AG04449 (cell line): ENCODE measurements at regions of chr12 and their contacts with region 1.

Region 1: DNA sequence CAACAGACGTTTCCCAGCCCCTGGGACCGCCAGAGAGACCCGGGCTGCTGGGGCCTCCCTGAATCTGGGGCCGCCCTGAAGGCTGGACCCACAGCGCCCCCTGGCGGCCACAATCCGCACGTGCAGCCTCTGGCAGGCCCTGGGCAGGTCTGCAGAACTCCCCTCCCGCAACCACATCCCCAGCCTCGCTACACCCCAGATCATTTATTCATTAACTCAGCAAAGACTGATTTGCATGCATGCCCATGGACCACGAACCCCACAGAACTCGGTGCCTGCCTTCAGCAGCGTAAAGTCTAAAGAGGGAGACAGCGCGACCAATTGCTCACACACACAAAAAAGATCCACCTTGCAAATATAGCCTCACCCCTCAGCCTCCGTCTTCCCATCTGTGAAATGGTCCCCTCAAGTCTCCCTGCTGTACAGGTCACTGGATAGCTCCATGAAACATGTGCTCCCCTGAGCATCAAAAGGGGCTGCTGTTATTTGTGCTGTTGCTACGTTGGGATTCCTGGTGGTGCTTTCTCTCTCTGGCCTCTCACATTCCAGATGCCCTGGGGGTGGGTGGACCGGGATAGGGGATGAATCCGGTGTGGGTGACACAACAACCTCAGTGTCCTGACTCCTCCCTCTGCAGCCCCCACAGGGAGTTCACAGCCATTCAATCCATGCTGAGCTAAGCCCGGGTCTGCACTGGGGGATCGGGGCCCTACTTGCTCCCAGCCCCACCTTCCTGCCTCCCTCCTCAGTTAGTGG is 96.4 kb downstream of the SCARB1 start:
- DNase-seq: no peak
- H3K4me3 ChIP-seq: no peak overlapping the region
- CTCF ChIP-seq: peak; percentile 98

Region 2: DNA sequence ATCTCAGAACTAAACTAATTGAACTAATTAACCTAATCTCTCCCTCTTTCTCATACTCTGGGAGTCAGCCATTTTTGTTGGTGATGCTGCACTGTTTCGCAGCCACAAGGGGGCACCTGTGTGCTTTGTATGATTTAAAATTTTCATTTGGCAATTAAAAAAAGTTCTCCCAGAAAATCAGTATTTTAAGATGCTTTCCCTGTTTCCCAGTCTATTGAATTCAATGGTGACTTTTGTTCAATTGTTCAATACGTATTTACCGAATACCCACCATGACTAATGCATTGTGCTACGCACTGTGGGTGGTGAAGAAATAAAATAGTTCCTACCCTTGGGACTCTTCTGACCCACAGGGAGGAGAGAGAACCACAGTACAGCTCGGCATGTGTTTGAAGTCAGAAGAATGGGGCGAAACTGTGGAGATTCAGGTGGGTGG is 730.6 kb before region 1 on chr12:
- CTCF ChIA-PET with region 1: interaction called, 73 read pairs
- POLR2A ChIA-PET with region 1: no interaction called
- DNase-seq: no peak
- H3K4me3 ChIP-seq: no peak overlapping the region
- CTCF ChIP-seq: peak; percentile 65

Region 3: DNA sequence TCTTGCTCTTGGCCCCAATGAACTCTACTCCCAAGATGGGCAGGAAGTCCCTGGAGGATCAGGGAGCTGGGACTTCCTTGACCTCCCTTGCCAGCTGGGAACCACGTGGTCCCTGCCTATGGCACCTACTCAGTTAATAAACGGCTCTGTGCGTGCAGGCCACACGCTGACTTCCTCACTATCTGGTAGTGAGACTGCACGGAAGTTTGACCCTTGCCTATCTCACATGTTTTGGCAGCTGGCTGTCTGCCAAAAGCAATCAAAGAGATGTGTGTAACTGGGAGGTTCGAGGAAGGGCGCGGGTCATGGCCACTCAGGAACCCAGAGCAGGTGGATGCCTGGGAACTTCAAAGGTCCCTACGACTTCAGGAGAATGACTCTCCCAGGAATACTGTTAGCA is 414.4 kb before region 1 on chr12:
- CTCF ChIA-PET with region 1: interaction called, 25 read pairs
- POLR2A ChIA-PET with region 1: no interaction called
- DNase-seq: no peak
- H3K4me3 ChIP-seq: no peak overlapping the region
- CTCF ChIP-seq: no peak

Region 4: GRCh38 chr12:124497658-124498057 is 269.6 kb before region 1 on chr12:
- CTCF ChIA-PET with region 1: interaction called, 35 read pairs
- POLR2A ChIA-PET with region 1: no interaction called
- DNase-seq: no peak
- H3K4me3 ChIP-seq: no peak overlapping the region
- CTCF ChIP-seq: no peak

Region 5: GRCh38 chr12:124524231-124524925 is 242.9 kb before region 1 on chr12:
- CTCF ChIA-PET with region 1: interaction called, 21 read pairs
- POLR2A ChIA-PET with region 1: interaction called, 12 read pairs
- DNase-seq: no peak
- H3K4me3 ChIP-seq: no peak overlapping the region
- CTCF ChIP-seq: no peak

Region 6: GRCh38 chr12:124709722-124710677 is 57.2 kb before region 1 on chr12:
- CTCF ChIA-PET with region 1: interaction called, 24 read pairs
- POLR2A ChIA-PET with region 1: no interaction called
- DNase-seq: no peak
- H3K4me3 ChIP-seq: no peak overlapping the region
- CTCF ChIP-seq: no peak

Region 7: DNA sequence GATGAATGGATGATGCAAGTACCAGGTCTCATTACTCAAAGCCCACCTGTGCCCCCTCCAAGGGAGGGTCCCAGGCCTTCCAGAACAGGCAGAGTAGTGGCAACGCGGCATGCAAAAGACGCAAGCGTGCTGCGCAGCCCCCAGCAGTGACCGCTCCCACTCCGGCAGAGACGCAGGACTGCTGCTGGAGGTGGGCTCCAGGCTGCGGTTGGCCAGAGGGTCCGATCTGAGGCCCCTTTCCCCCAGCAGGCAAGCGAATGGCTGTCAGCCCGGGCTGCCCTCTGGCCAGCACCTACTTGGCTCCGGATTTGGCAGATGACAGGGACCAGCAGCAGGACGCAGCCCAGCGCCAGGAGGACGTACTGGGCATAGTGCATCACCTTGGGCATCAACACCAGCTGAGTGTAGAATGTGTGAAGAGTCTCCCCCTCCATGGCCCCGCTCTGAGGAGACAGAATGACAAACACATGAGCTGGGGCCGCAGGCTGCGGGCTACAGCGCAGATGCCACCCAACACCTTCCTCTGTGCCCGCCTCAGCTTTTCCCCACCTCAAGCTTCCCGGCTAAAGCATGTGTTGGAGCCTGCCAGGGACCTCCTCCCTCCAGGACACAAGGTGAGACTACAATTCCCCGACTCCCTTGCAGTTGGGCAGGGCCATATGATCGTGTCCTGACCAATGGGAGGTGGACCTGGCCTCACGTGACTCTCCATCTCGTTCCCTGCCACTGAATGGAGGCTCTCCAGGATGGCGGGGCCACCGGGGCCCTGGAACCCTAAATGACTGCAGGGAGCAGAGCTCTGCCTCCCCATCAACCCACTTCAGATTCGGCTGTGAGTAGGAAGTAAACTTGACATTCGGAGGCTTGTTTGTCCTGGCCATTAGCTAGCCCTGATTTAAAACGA is 19.1 kb after region 1 on chr12:
- CTCF ChIA-PET with region 1: interaction called, 10 read pairs
- POLR2A ChIA-PET with region 1: no interaction called
- DNase-seq: peak; percentile 42
- H3K4me3 ChIP-seq: peak overlapping the region; percentile 54
- CTCF ChIP-seq: no peak

Region 8: GRCh38 chr12:125049093-125049458 is 281.8 kb after region 1 on chr12:
- CTCF ChIA-PET with region 1: no interaction called
- POLR2A ChIA-PET with region 1: no interaction called
- DNase-seq: no peak
- H3K4me3 ChIP-seq: peak overlapping the region; percentile 72
- CTCF ChIP-seq: no peak